Activated CD4-positive, alpha-beta memory T cell treated with anti-CD3 and anti-CD28 coated beads for 36 hours (primary cell): ENCODE measurements at regions of chr6 and their contacts with region 1.

Region 1: GRCh38 chr6:158869826-158870648 is 50.9 kb upstream of the EZR start:
- DNase-seq: peak; percentile 97
- H3K4me3 Mint-ChIP-seq: peak overlapping the region; percentile 82
- H3K27ac Mint-ChIP-seq: peak overlapping the region; percentile 98
- H3K4me1 Mint-ChIP-seq: peaks cover 34% of the 10 kb centered on the region
- H3K27me3 Mint-ChIP-seq: peaks cover 1% of the 10 kb centered on the region

Region 2: DNA sequence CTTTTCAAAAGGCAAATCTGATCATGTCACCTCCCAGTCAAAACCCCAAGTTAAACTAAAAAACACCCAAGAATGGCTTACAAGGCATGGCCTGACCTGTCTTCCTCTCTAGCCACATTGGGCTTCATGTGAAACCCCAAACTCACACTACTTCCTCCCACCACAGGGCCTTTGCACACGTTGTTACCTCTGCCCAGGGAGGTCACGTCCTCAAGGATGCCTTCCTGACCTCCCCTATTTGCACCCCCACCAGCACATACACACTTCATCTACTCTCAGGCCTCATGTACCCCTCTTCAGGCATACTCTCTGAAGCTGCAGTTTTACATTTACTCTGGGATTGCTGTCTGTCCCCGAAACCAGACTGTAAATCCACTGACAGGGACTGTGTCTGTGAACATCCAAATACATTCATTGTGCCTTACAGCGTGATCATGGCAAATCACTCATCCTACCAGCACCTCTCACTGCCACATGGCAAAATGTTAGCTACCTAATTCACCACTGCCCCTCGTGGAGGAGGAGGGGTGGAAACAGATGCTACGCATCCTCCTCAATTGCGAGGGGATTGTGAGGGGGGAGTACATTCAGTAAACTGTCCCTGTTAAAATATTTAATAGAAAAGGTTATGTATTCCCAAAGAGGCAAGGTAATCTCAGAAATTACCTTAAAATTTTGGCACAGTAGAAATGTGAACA is 56.9 kb before region 1 on chr6:
- CTCF ChIA-PET with region 1: interaction called, 3 read pairs
- POLR2A ChIA-PET with region 1: interaction called, 28 read pairs
- intact Hi-C with region 1: loop called (anchors 1 kb)
- DNase-seq: peak; percentile 39
- H3K4me3 Mint-ChIP-seq: peak overlapping the region; percentile 100
- H3K27ac Mint-ChIP-seq: peak overlapping the region; percentile 99
- H3K4me1 Mint-ChIP-seq: peaks cover 83% of the 10 kb centered on the region
- H3K27me3 Mint-ChIP-seq: no peaks in the 10 kb centered on the region

Region 3: DNA sequence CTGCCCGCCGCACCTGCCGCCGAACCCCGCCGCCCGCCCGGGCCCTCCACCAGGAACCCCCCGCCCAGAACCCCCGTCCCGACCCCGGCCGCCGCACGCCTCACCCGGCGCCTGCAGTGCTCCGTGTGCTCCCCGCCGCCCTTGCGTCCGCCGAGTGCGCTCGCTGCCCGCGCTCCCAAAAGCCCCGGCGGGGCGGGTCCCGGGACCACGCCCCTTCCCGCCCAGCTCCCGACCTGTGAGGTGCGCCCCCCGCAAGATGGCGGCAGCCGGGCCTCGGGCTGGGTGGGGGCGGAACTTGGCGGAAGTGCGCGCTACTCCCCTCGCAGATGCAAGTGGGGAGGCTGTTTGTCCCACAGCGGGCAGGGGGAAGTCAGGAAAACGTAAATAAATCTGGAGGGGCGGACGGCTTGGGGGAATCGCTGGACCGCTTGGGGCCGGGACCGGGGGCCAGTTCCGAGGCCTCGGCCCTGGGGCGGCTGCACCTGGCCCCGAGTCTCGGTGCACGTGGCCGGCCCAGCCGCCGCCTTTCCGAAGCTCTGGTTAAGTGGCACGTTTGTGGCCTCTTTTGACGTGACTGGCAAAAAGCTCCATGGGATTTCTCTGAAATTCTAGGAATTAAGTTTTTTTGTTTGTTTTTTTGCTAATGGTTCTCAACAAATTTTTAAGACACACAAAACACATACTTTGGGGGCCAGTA is 50.7 kb before region 1 on chr6 and contains the start of gene EZR:
- CTCF ChIA-PET with region 1: interaction called, 3 read pairs
- POLR2A ChIA-PET with region 1: interaction called, 43 read pairs
- intact Hi-C with region 1: loop called (anchors 1 kb)
- DNase-seq: peak; percentile 91
- H3K4me3 Mint-ChIP-seq: peak within 1 kb of the TSS; percentile 100
- H3K27ac Mint-ChIP-seq: peak within 1 kb of the TSS; percentile 99
- H3K4me1 Mint-ChIP-seq: peaks cover 43% of the 10 kb centered on the region
- H3K27me3 Mint-ChIP-seq: no peaks in the 10 kb centered on the region
- total RNA-seq, gene EZR: 255 to 256 TPM

Region 4: DNA sequence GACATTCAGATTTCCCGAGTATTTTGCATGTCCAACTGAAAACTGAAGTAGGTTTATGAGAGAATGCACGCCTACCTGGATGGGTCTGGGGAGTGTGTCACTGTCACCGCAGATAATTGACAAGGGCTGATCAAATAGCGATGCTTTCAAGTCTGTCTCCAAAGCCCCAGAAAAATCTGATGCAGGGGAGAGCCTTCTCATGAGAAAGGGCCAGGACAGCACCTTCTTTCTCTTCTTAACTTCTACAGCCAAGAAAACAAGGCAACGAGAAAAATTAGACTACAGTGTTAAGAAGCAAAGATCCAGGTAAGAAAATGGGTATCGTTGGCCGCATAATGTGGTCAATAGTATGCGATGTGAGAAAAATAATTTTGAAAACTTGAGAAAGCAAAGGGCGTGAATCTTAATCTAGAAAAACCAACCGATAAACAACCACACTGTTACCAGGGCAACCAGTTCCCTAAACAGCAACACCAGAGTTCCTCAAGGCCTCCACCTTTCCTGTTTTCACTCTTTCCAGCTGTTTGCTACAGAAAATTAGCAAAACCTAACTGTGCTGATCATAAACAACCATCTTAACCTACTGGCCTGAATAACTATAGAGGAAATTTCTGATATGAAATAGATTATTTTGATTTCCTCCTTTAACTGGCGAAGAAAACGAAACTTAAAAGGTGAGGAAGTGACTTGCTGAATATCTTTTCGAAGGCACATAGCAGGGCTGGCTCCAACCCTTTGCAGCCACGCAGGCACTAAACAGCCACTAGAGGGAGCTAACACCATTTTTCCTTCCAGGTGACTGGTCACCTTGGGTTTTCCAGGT is 172.2 kb after region 1 on chr6:
- CTCF ChIA-PET with region 1: no interaction called
- POLR2A ChIA-PET with region 1: no interaction called
- intact Hi-C with region 1: no loop called
- DNase-seq: peak; percentile 86
- H3K4me3 Mint-ChIP-seq: peak overlapping the region; percentile 94
- H3K27ac Mint-ChIP-seq: peak overlapping the region; percentile 95
- H3K4me1 Mint-ChIP-seq: peaks cover 69% of the 10 kb centered on the region
- H3K27me3 Mint-ChIP-seq: no peaks in the 10 kb centered on the region